ENCODE measurements at regions of chr1 and their contacts with region 1.

Region 1: DNA sequence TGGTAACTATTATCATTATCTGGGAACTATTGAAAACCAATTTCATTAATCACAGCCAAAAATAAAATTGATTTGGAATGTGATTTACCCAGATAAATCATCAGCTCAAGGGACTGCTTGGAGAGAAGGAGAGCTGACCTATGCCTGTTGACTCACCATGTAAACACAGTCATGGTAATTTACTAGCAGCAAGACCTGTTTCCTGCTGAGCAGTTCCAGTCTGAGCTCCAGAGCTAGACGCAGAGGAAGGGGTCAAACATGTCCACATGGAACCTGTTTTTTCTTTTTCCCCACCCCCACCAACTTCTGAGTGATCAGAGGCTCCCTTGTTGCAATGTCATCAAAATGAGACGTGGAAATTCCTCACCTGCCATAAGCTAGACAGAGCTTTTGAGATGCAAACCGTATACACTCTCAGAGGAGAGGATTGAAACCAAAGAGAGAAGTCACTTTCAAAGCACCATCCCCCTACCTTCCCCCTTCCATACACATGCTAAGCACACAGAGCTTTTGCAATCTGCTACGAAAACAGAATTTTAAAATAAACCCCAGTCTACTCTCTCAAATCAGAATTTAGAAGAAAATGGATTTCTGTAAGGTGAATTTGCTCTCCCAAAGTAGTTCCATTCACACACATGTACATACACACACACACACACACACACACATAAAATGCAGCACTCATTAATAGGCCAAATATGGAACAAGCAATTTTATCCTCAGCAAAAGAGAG is 55.9 kb upstream of the PTGFRN start:
- DNase-seq: no peak
- ATAC-seq: no peak
- H3K4me3 ChIP-seq: no peak overlapping the region
- H3K27ac ChIP-seq: no peak overlapping the region
- H3K4me1 ChIP-seq: peaks cover 0 to 10% of the 10 kb centered on the region in 2 donors
- H3K27me3 ChIP-seq: no peaks in the 10 kb centered on the region
- CTCF ChIP-seq: no peak
- POLR2A ChIP-seq: no peak

Region 2: DNA sequence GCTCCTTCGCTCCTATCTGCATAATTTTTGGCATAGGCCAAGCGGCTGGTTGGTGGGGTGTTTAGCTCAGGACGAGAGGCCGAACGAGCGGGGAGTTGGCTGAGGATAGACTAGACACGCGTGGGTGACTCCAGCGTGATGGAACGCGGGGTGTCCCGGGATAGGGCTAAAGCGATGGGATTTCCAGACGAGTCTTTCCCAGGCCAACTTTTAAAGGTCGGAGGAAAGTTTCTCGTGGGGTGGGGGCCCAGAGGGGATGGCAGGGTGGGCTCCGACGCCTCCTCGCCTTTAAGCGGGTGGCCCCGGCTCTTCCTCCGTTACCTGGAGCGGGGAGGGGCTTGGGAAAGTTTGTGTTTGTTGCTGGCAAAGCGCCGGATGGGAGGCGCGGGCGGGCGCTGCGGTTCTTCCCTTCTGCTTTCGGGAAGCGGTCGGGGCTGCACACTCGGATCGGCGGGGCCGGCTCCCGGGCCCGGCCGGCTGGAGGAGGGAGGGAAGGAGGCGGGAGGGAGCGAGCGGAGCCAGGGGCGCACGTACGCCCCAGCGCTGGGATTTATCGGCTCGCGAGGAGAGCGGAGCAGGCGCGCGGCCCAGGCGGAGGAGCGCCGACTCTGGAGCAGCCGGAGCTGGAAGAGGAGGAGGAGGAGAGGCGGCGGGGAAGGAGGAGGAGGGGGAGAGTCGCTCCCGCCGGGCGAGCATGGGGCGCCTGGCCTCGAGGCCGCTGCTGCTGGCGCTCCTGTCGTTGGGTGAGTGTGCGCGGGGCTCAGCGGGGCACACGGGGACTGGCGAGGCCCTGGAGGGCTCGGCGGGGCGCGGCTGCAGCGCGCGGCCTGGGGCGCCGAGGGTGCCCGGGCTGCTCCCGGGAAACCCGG is 55.9 kb after region 1 on chr1 and contains the start of gene PTGFRN:
- in situ Hi-C with region 1: no loop called
- intact Hi-C with region 1: loop called (anchors 10 kb)
- DNase-seq: peak in 1 of 2 donors; percentile 23
- ATAC-seq: peak; percentile 65
- H3K4me3 ChIP-seq: peak within 1 kb of the TSS; percentile 55 to 66 (median 60)
- H3K27ac ChIP-seq: peak within 1 kb of the TSS; percentile 35 to 48 (median 44)
- H3K4me1 ChIP-seq: no peaks in the 10 kb centered on the region
- H3K27me3 ChIP-seq: peaks cover 9 to 37% (median 12%) of the 10 kb centered on the region in 3 donors
- CTCF ChIP-seq: no peak
- POLR2A ChIP-seq: no peak
- total RNA-seq, gene PTGFRN: 1.5 to 18.1 (median 2.9) TPM

Measured in gastrocnemius medialis (tissue), 4 donors.